RWPE1 (cell line): ENCODE measurements at regions of chr3 and their contacts with region 1.

Region 1: DNA sequence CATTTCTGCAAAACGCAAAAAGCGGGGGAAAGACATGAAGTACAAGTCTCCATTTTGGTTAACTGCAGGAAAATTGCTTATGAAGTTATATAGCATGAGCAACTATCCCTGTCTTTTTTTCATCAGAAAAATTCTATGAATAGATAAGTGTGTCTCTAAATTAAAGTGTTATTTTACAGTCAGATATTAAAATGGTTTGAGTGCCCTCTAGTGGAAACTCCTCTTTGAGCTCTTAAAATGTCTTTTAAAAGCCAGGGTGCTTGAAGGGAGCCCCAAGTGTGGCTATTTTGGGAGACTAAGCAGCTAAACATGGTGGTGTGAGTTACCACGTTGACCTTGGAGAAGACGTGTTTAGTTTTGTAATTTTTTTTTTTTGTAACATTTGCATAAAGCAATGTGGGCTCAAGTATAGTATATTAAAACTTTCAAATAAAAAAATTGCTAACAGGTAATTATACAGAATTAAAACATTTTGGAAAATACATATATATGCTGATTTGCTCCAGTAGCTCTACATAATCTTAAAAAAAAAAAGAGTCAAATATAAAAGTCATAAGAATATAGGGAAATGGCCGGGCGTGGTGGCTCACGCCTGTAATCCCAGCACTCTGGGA is 77.2 kb downstream of the PPP2R3A start:
- DNase-seq: peak; percentile 47
- H3K27ac ChIP-seq: no peak overlapping the region
- CTCF ChIP-seq: peak; percentile 66

Region 2: DNA sequence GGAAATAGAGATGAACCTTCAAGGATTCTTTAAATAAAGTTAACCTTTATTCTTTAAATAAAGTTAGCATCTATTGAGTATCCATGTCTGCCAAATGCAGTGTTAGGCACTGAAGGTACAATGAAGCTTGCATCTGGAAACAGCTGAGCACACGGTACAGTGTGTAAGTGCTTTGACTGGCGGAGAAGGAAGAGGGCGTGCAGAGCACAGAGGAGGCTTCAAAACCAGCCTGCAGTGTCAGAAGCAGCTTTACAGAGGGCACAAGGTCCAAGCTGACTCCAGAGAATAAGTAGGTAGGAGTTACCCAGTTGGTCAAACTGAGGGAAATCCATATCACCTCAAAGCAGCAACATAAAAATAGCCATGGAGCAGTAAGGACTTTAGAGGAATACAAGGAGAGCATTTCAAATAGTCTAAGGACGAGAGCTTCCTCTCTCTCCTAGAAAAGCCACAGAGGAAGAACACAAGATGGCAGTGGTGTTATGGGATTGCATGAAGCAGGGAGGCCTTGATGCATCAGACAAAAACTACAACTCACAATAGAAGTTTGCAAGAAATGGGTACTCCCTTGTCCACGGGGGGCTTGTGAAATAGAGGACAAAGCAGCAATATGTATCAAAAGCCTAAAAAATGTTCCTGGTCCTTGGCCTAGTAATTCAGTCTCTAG is 137.5 kb before region 1 on chr3:
- CTCF ChIA-PET with region 1: interaction called, 38 read pairs
- POLR2A ChIA-PET with region 1: no interaction called
- DNase-seq: no peak
- H3K27ac ChIP-seq: no peak overlapping the region
- CTCF ChIP-seq: no peak

Region 3: GRCh38 chr3:135918580-135918962 is 124.1 kb before region 1 on chr3:
- CTCF ChIA-PET with region 1: interaction called, 10 read pairs
- POLR2A ChIA-PET with region 1: no interaction called
- DNase-seq: peak; percentile 38
- H3K27ac ChIP-seq: no peak overlapping the region
- CTCF ChIP-seq: 0 out of 2 replicates have a peak, but pooled peaks have one; percentile 18

Region 4: DNA sequence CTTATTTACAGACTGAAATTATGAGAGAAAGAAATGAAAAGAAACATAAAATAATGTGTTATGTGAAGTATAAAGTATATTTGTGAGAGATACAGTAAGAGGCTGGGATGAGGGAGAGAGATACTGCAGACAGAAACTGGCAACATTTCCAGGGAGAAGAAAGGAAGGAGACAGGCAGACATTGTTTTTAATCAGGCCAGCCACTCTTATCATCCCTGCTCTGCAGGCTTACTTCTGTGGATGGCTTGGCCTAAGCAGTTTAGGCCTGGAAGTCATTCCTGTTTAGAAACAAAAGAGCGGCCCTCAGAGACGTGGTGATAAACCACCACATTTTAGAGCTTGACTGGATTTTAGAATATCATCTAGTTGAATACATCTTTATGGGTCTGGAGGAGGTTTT is 219.8 kb after region 1 on chr3:
- CTCF ChIA-PET with region 1: no interaction called
- POLR2A ChIA-PET with region 1: no interaction called
- DNase-seq: no peak
- H3K27ac ChIP-seq: no peak overlapping the region
- CTCF ChIP-seq: no peak